OCI-LY7 (cell line): ENCODE measurements at regions of chr12 and their contacts with region 1.

Region 1: DNA sequence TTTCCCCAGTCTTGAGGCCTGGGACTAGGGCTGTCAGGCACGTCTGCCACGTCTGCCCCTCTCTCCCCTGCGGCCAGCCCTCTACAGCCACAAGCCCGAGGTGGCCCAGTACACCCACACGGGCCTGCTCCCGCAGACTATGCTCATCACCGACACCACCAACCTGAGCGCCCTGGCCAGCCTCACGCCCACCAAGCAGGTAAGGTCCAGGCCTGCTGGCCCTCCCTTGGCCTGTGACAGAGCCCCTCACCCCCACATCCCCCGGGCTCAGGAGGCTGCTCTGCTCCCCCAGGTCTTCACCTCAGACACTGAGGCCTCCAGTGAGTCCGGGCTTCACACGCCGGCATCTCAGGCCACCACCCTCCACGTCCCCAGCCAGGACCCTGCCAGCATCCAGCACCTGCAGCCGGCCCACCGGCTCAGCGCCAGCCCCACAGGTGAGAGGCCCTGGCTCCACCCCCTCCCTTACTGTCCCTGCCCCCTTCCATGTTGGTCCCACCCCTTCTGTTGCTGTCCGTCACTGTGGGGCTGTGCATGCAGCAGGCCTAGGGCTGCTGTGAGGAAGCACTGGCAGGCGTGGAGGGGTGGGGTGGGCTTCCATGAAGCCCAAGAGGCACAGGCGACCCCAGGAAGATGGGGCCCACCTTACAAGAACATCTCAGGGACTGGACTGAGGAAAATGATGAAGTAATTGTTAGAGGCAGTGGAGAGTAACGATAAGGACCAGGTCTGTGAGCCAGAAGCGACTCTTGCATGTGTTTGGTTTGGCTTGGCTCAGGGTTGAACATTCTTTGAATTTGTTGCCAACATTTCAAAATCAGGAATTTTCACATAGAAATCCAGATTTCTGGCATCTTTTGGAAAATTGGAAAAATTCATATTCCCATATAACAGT is 16.8 kb downstream of the C12orf43 start:
- DNase-seq: no peak
- H3K4me3 ChIP-seq: no peak overlapping the region
- H3K27ac ChIP-seq: no peak overlapping the region
- H3K4me1 ChIP-seq: peaks cover 8% of the 10 kb centered on the region
- CTCF ChIP-seq: no peak

Region 2: DNA sequence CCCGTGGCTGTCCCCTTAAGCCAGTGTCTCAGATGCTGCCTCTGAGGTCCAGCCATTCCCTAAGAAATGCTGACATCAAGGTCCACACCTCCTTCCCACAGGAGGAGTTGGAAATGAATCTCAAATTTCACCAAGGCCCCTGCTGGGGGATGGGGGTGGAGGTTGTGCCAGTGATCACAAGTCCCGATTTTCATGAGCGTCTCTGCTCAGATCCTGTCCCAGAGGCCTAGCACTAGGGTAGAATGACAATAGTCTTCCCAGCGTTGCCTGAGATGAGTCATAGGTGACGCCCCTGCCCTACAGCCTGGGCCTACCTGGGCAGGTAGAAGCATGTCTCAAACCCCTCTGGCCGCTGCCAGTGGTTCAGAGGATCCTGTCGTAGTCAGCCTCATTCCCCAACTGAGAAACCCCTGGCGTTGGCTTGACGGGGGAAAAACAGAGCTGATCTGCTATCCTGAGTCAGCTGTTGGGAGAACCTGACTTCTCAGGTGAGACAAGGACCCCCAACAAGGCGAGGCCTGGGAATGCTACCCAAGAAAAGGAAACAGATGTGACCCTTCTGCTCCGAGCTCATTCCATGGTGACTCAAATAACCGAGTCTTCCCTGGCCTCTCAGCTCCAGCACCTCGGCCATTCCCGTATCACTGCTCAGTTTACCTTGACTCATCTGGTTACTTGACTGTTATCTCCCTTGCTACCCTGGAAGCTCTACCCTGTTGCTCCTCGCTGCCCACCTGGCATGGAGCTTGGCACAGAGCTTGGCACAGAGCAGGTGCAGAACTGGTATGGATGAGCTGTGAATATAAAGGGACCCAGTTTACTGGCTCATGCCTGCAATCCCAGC is 73.5 kb before region 1 on chr12:
- CTCF ChIA-PET with region 1: no interaction called
- POLR2A ChIA-PET with region 1: no interaction called
- intact Hi-C with region 1: no loop called
- DNase-seq: no peak
- H3K4me3 ChIP-seq: no peak overlapping the region
- H3K27ac ChIP-seq: no peak overlapping the region
- H3K4me1 ChIP-seq: no peaks in the 10 kb centered on the region
- CTCF ChIP-seq: no peak

Region 3: DNA sequence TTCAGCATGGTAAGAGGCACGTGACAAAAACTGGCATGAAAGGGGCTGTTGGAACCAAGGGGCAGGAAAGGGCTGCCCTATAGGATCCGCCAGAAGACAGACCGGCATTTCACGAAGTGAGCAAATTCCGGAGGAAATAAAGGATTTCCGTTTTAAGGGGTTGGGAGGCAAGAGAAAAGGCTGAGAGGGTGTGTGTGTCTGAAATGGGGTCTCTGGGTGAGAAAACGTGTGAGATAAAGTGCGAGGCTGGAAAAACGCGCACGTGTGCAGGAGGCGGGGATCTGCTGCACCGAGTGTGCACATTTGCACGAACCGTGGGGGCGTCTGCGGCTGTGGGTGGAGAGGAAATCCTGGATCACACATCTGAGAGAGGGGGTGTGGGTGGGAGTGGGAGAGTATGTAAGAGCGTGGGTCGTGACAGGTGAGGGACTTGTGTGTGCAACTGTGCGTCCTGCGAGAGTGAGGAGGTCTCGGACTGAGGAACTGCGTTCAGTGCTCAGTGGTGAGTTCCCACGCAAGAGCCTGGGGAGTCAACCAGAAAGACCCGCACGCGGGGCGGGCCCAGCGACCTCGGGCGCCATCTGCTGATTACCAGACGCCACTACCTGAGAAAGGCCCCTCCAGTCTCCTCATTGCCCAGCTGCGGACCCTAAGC is 96.2 kb after region 1 on chr12:
- CTCF ChIA-PET with region 1: no interaction called
- POLR2A ChIA-PET with region 1: no interaction called
- intact Hi-C with region 1: loop called (anchors 5 kb)
- DNase-seq: peak; percentile 65
- H3K4me3 ChIP-seq: no peak overlapping the region
- H3K27ac ChIP-seq: no peak overlapping the region
- H3K4me1 ChIP-seq: peaks cover 6% of the 10 kb centered on the region
- CTCF ChIP-seq: peak; percentile 81